Lower lobe of right lung (tissue), 2 donors: ENCODE measurements at regions of chr1 and their contacts with region 1.

Region 1: DNA sequence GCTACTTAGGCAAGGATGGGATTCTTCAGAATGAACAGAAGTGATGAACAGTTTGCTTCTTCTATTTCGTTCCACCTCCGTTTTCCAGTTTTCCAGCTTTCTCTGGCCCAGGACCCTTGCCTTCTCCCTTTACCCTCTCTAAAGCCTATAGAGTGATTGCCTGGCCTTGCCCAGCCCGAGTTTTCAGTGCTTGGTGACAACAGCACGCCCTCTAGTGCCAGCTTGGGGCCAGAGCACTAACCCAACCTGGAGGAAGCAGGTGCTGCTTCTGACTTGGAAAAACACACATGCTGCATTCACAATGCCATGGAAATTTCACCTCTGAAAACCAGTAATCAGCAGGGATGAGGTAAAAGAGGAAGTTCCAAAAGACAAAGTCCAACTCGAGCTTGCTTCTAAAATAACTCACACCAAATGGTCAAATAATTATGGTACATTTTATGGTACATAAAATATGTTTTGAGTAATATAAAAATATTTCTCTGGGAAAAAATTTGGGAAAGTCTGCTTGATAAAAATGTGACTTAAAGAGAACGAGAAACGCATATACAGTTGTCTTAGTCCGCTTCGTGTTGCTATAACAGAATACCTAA is 26.1 kb downstream of the UBE2T start:
- DNase-seq: peak; percentile 82
- ATAC-seq: peak; percentile 86 to 87
- H3K4me3 ChIP-seq: no peak overlapping the region
- H3K27ac ChIP-seq: no peak overlapping the region
- H3K4me1 ChIP-seq: peaks cover 6% of the 10 kb centered on the region
- H3K27me3 ChIP-seq: no peaks in the 10 kb centered on the region
- CTCF ChIP-seq: peak; percentile 92

Region 2: DNA sequence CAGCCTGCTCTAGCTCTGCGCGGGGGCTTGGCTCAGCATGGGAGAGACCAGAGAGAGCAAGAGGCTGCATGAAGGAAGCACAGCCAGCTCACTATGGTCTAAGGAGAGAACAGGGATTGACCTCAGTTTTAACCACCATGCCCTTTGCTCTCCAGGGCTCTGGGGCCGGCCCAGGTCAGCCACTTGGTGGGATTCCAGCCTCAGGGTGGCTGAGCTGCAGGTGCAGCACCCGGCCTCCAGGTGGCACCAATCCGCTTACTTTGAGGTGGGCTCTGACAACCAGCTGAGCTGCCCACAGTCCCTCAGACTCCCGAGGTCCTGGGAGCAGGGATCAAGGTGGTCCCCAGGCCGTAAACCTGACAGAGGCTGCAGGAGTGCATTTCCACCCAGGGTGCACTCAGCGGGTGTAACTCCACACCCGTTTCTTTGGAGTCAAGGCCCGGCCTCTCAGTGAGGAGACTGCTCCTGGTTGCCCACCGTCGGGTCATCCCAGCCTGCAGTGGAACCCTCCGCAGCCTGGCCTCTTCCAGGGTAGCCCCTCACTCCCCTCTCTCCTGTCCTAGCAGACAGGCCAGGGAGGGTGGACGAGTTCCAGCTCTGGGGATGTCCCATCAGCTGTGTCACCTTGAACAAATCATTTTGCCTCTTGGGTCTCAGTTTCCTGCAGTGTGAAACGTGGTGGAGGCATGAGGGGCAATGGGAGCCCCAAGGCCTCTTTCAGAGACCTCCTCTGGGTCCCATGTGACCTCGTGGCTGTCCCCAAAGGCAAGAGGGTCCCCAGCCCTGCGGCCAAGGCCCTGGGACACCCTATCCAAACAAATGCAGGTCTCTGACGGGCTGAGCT is 122.7 kb before region 1 on chr1:
- intact Hi-C with region 1: loop called (anchors 10 kb)
- DNase-seq: peak; percentile 74
- ATAC-seq: peak; percentile 69 to 72
- H3K4me3 ChIP-seq: peak overlapping the region; percentile 23
- H3K27ac ChIP-seq: no peak overlapping the region
- H3K4me1 ChIP-seq: peaks cover 6% of the 10 kb centered on the region
- H3K27me3 ChIP-seq: peaks cover 19% of the 10 kb centered on the region
- CTCF ChIP-seq: peak; percentile 91